ENCODE measurements at regions of chr10 and their contacts with region 1.

Region 1: GRCh38 chr10:122565728-122566206 is 5.2 kb downstream of the DMBT1 start:
- DNase-seq: peak; percentile 44 to 89
- H3K4me3 ChIP-seq: no peak overlapping the region
- H3K27ac ChIP-seq: no peak overlapping the region
- H3K4me1 ChIP-seq: peaks cover 0 to 2% (median 0%) of the 10 kb centered on the region in 4 experiments; a peak in 1 of 7 replicates
- H3K27me3 ChIP-seq: no peaks in the 10 kb centered on the region
- CTCF ChIP-seq: peak; percentile 55 to 85 (median 84)
- EP300 ChIP-seq: no peak
- POLR2A ChIP-seq: no peak
- RAD21 ChIP-seq: peak; percentile 91 to 95

Region 2: GRCh38 chr10:122221958-122222357 is 343.8 kb before region 1 on chr10:
- CTCF ChIA-PET with region 1: no interaction called
- POLR2A ChIA-PET with region 1: no interaction called
- DNase-seq: no peak
- H3K4me3 ChIP-seq: no peak overlapping the region
- H3K27ac ChIP-seq: no peak overlapping the region
- H3K4me1 ChIP-seq: no peaks in the 10 kb centered on the region
- H3K27me3 ChIP-seq: no peaks in the 10 kb centered on the region
- CTCF ChIP-seq: no peak
- EP300 ChIP-seq: no peak
- POLR2A ChIP-seq: no peak
- RAD21 ChIP-seq: no peak

Region 3: GRCh38 chr10:122279725-122280141 is 286.0 kb before region 1 on chr10:
- CTCF ChIA-PET with region 1: interaction called, 12 read pairs
- POLR2A ChIA-PET with region 1: no interaction called
- DNase-seq: peak in 1 of 2 experiments; percentile 86
- H3K4me3 ChIP-seq: no peak overlapping the region
- H3K27ac ChIP-seq: no peak overlapping the region
- H3K4me1 ChIP-seq: peaks cover 0 to 6% (median 2%) of the 10 kb centered on the region in 4 experiments; a peak in 2 of 7 replicates
- H3K27me3 ChIP-seq: no peaks in the 10 kb centered on the region
- CTCF ChIP-seq: peak; percentile 87 to 93 (median 89)
- EP300 ChIP-seq: no peak
- POLR2A ChIP-seq: no peak
- RAD21 ChIP-seq: peak; percentile 93 to 97

Region 4: GRCh38 chr10:122459561-122460273 is 106.0 kb before region 1 on chr10:
- CTCF ChIA-PET with region 1: interaction called, 12 read pairs
- POLR2A ChIA-PET with region 1: no interaction called
- DNase-seq: no peak
- H3K4me3 ChIP-seq: no peak overlapping the region
- H3K27ac ChIP-seq: no peak overlapping the region
- H3K4me1 ChIP-seq: peaks cover 0 to 20% (median 5%) of the 10 kb centered on the region in 4 experiments; a peak in 6 of 7 replicates
- H3K27me3 ChIP-seq: peaks cover 25 to 47% (median 41%) of the 10 kb centered on the region in 4 experiments
- CTCF ChIP-seq: no peak
- EP300 ChIP-seq: peak in 1 of 2 experiments; percentile 28; a peak in 1 of 3 replicates
- POLR2A ChIP-seq: no peak
- RAD21 ChIP-seq: no peak

Region 5: DNA sequence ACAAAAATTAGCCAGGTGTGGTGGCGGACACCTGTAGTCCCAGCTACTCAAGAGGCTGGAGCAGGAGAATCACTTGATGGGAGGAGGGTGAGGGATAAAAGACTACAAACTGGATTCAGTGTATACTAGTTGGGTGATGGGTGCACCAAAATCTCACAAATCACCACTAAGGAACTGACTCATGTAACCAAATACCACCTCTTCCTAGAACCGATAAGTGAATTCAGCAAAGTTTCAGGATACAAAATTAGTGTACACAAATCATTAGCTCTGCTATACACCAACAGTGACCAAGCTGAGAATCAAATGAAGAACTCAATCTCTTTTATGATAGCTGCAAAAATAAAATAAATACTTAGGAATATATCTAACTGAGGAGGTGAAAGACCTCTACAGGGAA is 28.2 kb before region 1 on chr10:
- CTCF ChIA-PET with region 1: interaction called, 12 read pairs
- POLR2A ChIA-PET with region 1: no interaction called
- DNase-seq: no peak
- H3K4me3 ChIP-seq: no peak overlapping the region
- H3K27ac ChIP-seq: no peak overlapping the region
- H3K4me1 ChIP-seq: no peaks in the 10 kb centered on the region
- H3K27me3 ChIP-seq: no peaks in the 10 kb centered on the region
- CTCF ChIP-seq: no peak
- EP300 ChIP-seq: no peak
- POLR2A ChIP-seq: no peak
- RAD21 ChIP-seq: no peak

Region 6: DNA sequence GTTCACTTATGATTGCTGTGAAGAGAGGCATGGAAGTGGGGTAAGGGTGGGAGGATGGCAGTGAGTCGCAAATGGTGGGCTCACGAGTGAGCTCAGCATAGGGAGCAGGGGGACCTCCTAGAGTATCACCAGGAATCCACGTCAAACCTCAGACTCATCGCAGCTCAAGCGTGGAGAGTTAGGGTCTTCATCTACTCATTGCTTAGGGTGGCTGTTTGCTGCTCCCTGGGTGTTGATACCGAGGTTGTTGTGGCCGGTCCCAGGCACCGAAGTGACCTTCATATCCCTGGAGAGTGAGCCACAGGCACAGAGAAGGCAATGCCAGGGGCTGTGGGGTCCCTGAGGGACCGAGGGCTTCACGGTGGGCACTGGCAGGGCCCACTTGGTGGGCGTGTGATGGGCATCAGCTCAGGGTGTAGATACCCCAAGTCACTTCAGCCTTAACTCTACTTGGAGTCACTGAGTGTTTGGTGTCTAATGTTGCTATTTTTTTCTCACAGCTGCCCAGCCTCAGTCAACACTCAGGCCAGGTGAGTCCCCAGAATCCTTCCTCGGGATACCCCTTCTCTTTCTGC is 11.6 kb after region 1 on chr10:
- CTCF ChIA-PET with region 1: interaction called, 43 read pairs
- POLR2A ChIA-PET with region 1: no interaction called
- DNase-seq: no peak
- H3K4me3 ChIP-seq: no peak overlapping the region
- H3K27ac ChIP-seq: no peak overlapping the region
- H3K4me1 ChIP-seq: no peaks in the 10 kb centered on the region
- H3K27me3 ChIP-seq: no peaks in the 10 kb centered on the region; a peak in 1 of 7 replicates
- CTCF ChIP-seq: no peak
- EP300 ChIP-seq: no peak
- POLR2A ChIP-seq: no peak
- RAD21 ChIP-seq: no peak

Region 7: DNA sequence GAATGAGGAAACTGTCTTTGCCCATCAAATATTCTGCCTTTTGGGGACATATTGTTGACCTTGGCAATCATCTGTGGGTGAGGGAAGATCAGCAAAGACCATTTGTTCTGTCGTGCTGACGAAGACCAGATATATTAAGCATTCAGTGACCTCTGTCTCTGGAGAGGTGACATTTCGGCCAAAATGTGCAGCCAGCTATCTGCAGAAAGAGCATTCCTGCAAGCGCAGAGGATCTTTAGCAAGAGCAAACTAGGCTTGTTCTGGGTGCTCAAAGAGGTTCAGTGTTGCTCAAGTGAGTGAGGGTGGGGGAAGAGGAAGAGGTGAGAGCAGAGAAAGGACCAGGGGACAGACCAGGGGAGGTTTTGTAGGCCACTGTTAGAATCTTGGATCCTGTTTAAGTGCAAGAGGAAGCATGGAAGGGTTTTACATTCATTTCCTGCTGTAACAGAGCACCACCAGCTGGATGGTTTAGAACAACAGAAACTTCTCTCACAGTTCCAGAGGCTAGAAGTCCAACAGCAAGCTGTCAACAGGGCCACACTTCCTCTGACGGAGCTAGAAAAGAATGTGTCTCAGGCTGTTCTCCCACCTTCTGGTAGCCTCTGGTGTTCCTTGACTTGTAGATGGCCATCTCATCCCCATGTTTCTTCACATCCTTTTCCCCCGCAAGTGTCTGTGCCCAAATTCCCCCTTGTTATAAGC is 122.7 kb after region 1 on chr10:
- CTCF ChIA-PET with region 1: interaction called, 10 read pairs
- POLR2A ChIA-PET with region 1: no interaction called
- DNase-seq: no peak
- H3K4me3 ChIP-seq: no peak overlapping the region
- H3K27ac ChIP-seq: no peak overlapping the region
- H3K4me1 ChIP-seq: 0 out of 7 replicates have a peak, but pooled peaks cover 0 to 2% (median 0%) of the 10 kb centered on the region in 4 experiments
- H3K27me3 ChIP-seq: no peaks in the 10 kb centered on the region
- CTCF ChIP-seq: peak in 2 of 3 experiments; percentile 2 to 31; a peak in 2 of 4 replicates
- EP300 ChIP-seq: no peak
- POLR2A ChIP-seq: no peak
- RAD21 ChIP-seq: peak; percentile 34 to 42; a peak in 3 of 4 replicates

Region 8: DNA sequence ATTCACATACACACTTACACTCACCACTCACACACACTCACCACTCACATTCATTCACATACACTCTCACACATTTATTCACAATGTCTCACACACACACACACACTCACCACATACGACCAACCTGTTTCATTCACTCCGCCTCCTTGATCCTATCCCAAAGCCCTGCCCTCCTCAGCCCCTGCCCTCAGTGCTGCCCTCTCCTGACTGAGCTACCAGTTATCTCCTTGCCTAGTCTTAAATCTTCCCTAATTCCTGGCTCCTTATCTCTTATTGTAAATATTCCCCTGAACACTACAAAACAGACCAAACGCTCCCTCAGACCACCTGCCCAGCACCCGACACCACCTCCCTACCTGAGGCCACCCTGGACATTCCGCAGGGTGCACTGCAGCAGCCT is 160.0 kb after region 1 on chr10:
- CTCF ChIA-PET with region 1: no interaction called
- POLR2A ChIA-PET with region 1: no interaction called
- DNase-seq: peak in 1 of 2 experiments; percentile 63
- H3K4me3 ChIP-seq: no peak overlapping the region
- H3K27ac ChIP-seq: no peak overlapping the region
- H3K4me1 ChIP-seq: peaks cover 0 to 2% (median 0%) of the 10 kb centered on the region in 4 experiments; a peak in 1 of 7 replicates
- H3K27me3 ChIP-seq: no peaks in the 10 kb centered on the region
- CTCF ChIP-seq: peak; percentile 49 to 75 (median 70); a peak in 3 of 4 replicates
- EP300 ChIP-seq: no peak
- POLR2A ChIP-seq: no peak
- RAD21 ChIP-seq: peak; percentile 33 to 49; a peak in 3 of 4 replicates

Measured in H1 (cell line).